Spleen (tissue), 13 donors: ENCODE measurements at regions of chr15 and their contacts with region 1.

Region 1: GRCh38 chr15:72155635-72156616 is 37.7 kb downstream of the SENP8 start:
- DNase-seq: peak; percentile 91
- H3K4me3 ChIP-seq: peak overlapping the region; percentile 23 to 65 (median 38)
- H3K27ac ChIP-seq: peak overlapping the region in 2 of 8 donors; percentile 19 to 21
- H3K4me1 ChIP-seq: peaks cover 0 to 24% (median 13%) of the 10 kb centered on the region in 6 donors
- H3K27me3 ChIP-seq: no peaks in the 10 kb centered on the region
- CTCF ChIP-seq: peak; percentile 68 to 91 (median 83)
- POLR2A ChIP-seq: no peak

Region 2: DNA sequence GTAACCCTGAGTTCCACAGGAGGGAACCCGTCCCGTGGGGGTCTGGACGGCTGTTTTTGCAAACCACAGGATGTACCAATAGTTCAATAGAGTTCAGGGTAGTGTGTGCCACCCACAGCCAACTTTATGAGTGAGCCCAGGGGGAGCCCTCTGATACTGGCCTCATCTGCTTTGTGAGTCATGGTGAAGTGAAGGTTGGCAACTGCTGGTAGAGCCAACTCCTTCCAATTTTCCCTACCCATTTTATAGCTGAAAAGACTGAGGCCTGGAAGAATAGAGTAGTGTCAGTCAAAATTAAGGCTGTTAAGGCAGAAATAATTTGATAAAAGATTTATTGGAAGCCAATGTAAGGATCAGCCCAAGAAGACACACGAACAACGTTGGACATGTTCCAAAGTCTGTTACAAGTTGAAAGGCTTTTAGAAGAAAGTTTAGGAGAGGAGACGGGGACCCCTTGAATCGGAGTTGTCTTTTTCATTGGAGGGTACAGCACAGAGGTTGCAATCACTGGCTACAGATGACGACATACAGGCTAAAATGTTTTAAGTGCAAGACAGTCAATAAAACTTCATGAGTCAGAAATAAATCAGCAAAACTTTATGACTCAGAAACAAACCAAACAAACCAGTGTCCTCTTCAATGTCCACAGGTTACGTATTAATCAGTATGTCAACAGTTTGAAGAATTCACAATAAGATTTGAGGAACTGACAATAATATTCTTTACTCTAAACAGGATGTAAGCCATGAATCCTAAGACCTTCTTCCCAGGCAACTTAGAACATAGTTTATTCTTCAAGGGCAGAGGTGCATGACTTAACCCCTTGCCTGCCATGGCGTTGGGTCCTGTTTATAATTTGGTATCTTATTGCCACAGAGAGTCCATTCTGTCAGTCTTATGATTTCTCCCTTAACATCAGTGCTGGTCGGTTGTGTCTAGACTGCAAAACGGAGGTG is 408.5 kb before region 1 on chr15:
- intact Hi-C with region 1: loop called (anchors 5 kb)
- DNase-seq: no peak
- H3K4me3 ChIP-seq: no peak overlapping the region
- H3K27ac ChIP-seq: no peak overlapping the region
- H3K4me1 ChIP-seq: no peaks in the 10 kb centered on the region
- H3K27me3 ChIP-seq: peaks cover 0 to 7% (median 0%) of the 10 kb centered on the region in 7 donors
- CTCF ChIP-seq: no peak
- POLR2A ChIP-seq: no peak

Region 3: GRCh38 chr15:71780115-71780976 is 375.6 kb before region 1 on chr15:
- intact Hi-C with region 1: loop called (anchors 5 kb)
- DNase-seq: no peak
- H3K4me3 ChIP-seq: no peak overlapping the region
- H3K27ac ChIP-seq: no peak overlapping the region
- H3K4me1 ChIP-seq: peaks cover 0 to 8% (median 5%) of the 10 kb centered on the region in 6 donors
- H3K27me3 ChIP-seq: peaks cover 0 to 34% (median 0%) of the 10 kb centered on the region in 7 donors
- CTCF ChIP-seq: peak; percentile 32 to 70 (median 56)
- POLR2A ChIP-seq: no peak